PC-9 (cell line): ENCODE measurements at regions of chr17 and their contacts with region 1.

Region 1: DNA sequence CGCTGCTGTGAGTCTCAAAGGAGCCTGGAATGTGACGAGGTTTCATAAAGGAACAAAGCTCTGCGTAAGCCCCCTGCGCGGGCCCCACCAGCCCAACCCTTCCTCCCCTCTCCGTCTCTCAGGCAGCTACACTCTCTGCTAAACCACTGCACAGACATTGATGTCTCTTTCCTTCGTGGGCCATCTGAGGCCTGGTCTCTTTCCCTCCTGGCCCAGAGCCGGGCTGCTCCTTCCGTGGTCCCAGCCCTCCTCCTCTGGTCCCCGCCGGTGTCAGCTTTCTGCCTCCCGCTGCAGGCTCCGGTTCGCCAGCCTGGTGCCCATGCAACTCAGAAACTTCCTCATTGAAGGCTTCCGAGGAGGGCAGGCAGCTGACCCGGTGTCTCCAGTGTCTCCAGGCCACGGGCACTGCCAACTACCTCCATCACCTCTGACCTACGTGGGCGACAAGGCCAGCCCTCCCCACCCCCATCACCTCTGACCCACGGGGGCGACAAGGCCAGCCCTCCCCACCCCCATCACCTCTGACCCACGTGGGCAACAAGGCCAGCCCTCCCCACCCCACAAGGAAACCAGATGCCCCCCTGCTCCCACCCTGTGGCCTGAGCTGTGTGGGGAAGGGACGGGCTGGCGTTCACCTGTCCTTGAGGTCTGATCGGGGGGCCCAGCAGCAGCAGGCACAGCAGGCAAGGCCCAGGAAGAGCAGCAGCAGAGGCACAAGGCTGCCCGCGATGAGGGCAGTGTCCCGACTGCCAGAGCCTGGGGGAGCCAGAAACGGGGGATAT is 7.2 kb downstream of the SCARF1 start:
- DNase-seq: no peak
- H3K4me3 ChIP-seq: no peak overlapping the region
- H3K27ac ChIP-seq: no peak overlapping the region
- H3K4me1 ChIP-seq: peaks cover 12% of the 10 kb centered on the region
- H3K27me3 ChIP-seq: no peaks in the 10 kb centered on the region
- CTCF ChIP-seq: no peak

Region 2: DNA sequence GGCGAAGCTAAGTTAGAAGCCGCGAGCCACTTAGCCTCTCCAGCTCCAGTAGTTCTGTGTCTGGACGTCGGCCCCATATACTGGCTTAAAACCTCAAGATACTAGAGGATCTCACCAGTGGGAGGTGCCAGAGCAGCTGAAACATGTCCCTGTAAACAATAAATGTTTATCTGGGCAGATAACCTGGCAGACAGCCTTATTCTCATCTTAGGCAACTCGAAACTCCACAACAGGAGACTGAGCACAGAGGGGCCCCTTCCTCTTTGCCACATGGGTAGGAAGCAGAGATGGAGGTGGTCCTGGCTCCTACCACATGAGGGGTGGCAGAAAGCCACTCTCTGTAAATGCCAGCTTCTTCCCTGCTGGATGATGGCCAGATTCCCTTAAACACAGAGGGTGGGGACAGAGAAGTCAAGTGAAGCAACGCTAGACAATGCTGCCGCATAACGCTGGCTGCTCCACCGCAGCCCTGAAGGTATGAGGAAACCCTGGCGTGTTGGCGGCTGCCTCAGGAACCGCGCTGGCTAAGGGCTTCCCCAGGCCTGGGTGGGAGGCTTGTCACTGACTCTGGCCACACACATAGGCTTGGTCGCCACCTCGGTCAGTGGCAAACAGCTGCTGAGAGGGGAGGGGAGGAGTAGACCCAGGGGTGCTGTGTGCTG is 484.4 kb after region 1 on chr17:
- CTCF ChIA-PET with region 1: interaction called, 11 read pairs
- POLR2A ChIA-PET with region 1: no interaction called
- intact Hi-C with region 1: no loop called
- DNase-seq: peak in 1 of 2 experiments; percentile 87
- H3K4me3 ChIP-seq: no peak overlapping the region
- H3K27ac ChIP-seq: no peak overlapping the region
- H3K4me1 ChIP-seq: no peaks in the 10 kb centered on the region
- H3K27me3 ChIP-seq: no peaks in the 10 kb centered on the region
- CTCF ChIP-seq: no peak